RWPE1 (cell line): ENCODE measurements at regions of chr12 and their contacts with region 1.

Region 1: GRCh38 chr12:31267966-31268365 is 58.0 kb downstream of the SINHCAF start:
- DNase-seq: no peak
- H3K27ac ChIP-seq: no peak overlapping the region
- CTCF ChIP-seq: no peak

Region 2: DNA sequence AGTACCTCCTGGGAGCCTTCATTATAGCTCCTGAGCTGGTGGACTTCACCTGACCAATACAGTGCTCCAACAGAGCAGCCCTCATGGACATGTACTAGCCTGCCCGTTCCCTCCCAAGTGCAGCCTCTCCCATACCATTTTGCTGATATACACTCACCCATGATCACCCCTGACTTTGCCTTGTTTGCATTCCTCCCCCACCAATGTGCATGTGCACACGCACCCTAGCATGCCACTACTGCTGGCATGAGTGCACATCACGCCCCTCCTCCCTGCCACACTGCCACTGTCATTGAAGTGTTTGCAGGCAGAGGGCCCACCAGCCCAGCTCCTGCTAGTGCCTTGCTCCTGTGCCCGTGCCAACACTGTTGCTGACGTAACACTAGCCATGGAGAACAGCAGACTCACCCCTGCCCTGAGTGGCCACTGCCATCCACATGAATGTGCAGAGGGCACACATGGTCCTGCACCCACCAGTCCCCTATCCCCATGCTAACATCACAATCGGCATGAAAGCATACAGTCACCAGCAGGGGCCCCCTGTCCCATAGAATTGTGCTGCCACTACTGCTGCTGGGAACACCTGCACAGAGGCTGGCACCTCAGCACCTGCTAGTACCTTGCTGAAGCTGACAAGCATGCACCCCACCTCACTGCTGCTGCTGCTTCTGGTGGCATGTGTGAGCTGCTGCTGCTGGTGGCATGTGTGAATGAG is 52.3 kb before region 1 on chr12:
- CTCF ChIA-PET with region 1: interaction called, 12 read pairs
- POLR2A ChIA-PET with region 1: no interaction called
- DNase-seq: peak; percentile 72
- H3K27ac ChIP-seq: no peak overlapping the region
- CTCF ChIP-seq: no peak

Region 3: DNA sequence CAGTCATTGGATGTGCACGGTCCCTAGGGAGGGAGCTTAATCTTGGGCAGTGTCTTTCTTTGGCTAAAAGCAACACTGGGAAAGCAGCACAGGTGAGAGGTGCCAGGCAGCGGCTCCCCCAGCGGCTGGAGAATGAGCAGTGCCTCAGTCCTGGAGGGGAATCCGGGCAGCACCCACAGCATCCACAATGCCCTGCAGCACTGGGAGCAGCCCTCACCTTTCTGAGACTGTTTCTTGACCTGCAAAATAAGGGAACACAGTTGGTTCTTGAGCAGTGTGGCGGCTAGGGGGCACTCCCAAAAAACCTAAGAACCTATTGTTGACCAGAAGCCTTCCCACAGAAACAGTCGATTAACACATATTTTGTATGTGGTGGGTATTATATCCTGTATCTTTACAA is 17.8 kb before region 1 on chr12:
- CTCF ChIA-PET with region 1: interaction called, 17 read pairs
- POLR2A ChIA-PET with region 1: no interaction called
- DNase-seq: no peak
- H3K27ac ChIP-seq: no peak overlapping the region
- CTCF ChIP-seq: no peak